ENCODE measurements at regions of chr19 and their contacts with region 1.

Region 1: DNA sequence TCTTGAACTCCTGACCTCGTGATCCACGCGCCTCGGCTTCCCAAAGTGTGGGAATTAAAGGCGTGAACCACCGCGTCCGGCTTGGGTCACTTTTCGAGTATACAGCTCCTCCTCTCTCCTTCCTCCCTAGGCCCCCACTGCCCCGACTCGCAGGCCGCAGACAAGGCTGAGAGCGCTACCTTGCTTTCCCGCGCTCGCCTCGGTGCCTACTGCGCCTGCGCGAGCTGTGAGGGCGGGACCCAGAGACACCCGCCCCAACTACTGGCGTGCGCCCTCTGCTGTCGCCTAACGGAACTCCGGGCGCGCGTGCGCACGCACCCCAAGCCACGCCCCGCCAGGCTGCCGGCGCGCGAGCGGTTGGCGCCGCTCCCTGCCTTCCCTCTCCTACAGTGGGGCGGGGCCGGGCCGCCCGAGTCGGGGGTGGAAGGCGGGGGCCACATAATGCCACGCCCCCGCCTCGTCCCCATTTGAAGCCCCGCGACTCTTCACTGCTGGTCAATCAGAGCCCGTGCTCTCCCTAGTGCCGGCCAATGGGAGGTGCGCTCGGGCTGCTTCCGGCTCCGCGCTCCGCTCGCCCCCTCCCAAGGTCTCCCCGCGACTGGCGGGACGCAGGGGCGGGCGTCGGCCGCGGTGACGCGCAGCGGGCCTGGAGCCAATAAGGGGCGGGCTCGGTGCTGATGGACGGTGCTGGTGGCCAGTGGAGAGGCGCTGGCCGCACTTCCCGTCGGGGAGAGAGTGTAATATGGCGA is at the start of gene RAB8A:
- DNase-seq: peak; percentile 98
- H3K4me3 ChIP-seq: peak within 1 kb of the TSS; percentile 95
- H3K27ac ChIP-seq: peak within 1 kb of the TSS; percentile 65
- H3K27me3 ChIP-seq: no peaks in the 10 kb centered on the region
- CTCF ChIP-seq: peak; percentile 78
- polyA plus RNA-seq, gene RAB8A: 107 and 109 TPM in 2 replicates

Region 2: DNA sequence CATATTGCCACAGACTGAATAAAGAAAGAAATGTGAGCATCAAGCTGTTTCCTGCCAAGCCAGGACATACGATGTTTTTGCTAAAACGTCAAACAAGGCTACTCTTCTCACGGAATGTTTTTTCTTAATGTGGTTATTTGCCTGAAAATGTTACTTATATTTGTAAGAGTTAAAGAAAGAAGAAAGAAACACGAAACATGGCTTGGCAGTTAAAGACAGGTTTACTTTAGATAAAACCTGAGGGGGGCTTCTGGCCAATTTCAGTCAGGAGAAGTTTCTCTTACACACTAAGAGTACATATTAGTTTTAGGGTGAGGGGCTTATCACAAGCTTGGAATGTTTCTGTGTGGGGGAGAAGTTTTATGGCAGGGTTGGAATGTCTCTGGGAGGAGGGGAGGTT is 166.9 kb before region 1 on chr19:
- CTCF ChIA-PET with region 1: no interaction called
- POLR2A ChIA-PET with region 1: no interaction called
- DNase-seq: no peak
- H3K4me3 ChIP-seq: no peak overlapping the region
- H3K27ac ChIP-seq: no peak overlapping the region
- H3K27me3 ChIP-seq: no peaks in the 10 kb centered on the region
- CTCF ChIP-seq: no peak

Region 3: DNA sequence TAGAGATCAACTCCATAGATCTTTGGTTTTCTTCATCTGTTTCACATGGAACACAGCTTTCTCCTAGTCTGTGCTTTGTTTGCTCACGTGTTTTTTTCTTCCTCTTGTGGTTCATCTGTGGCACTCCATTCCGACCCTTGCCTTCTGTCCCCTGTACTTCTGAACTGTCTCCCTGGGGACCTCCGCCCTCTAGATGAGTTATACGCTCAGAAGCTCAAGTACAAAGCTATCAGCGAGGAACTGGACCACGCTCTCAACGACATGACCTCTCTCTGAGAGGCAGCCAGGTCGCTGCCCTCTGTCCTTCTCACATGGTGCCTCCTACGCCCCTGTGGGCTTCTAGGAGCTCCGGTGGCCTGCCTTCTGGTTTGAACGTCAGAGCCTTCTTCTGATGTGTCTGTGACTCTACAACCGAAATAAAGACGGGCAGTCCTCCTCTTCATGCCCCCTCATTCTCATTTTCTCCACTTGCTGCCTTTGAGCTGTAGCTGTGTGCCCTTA is 16.2 kb before region 1 on chr19:
- CTCF ChIA-PET with region 1: interaction called, 26 read pairs
- POLR2A ChIA-PET with region 1: interaction called, 3 read pairs
- DNase-seq: no peak
- H3K4me3 ChIP-seq: no peak overlapping the region
- H3K27ac ChIP-seq: peak overlapping the region; percentile 65
- H3K27me3 ChIP-seq: no peaks in the 10 kb centered on the region
- CTCF ChIP-seq: no peak

Measured in AG04450 (cell line).